Naive thymus-derived CD4-positive, alpha-beta T cell (primary cell): ENCODE measurements at regions of chr10 and their contacts with region 1.

Region 1: GRCh38 chr10:69506834-69507721 is 55.8 kb downstream of the TSPAN15 start:
- DNase-seq: peak in 2 of 9 donors; percentile 5
- ATAC-seq: peak; percentile 11
- H3K4me3 ChIP-seq: peak overlapping the region; percentile 43
- H3K4me3 Mint-ChIP-seq: peak overlapping the region; percentile 63 to 80 (median 74)
- H3K27ac ChIP-seq: no peak overlapping the region
- H3K27ac Mint-ChIP-seq: peak overlapping the region; percentile 58 to 93 (median 86)
- H3K4me1 ChIP-seq: peaks cover 7 to 8% of the 10 kb centered on the region in 2 donors
- H3K4me1 Mint-ChIP-seq: peaks cover 9 to 16% (median 10%) of the 10 kb centered on the region in 7 donors
- H3K27me3 ChIP-seq: no peaks in the 10 kb centered on the region
- H3K27me3 Mint-ChIP-seq: peaks cover 0 to 29% (median 0%) of the 10 kb centered on the region in 5 donors

Region 2: DNA sequence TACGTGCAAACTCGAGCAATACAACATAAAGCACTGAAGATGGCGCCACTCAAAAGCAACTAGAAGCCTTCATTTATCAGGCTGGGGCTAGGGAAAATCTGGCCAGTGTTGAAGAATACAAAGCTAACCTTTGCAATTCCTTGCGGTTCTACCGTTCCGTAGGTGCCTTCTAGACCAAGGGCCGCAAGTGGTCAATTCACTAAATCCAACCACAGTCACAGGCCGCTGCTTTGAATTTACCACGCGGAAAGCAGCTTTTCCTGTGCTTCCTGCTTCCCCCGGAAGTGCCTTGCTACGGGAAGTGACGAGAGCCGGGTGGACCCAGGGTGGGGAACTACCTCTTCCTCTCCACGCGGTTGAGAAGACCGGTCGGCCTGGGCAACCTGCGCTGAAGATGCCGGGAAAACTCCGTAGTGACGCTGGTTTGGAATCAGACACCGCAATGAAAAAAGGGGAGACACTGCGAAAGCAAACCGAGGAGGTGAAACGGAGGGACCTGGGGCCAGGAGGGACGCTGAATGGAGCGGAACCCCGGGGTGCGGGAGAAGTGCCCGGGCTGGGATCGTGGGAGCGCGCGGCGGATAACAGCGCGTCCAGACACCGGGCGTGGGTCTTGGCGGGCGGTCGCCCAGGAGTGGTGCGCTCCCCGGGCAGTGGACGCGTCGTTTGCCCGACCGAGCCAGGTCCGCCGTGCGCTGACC is 551.1 kb before region 1 on chr10 and contains the start of gene DDX21:
- CTCF ChIA-PET with region 1: no interaction called
- POLR2A ChIA-PET with region 1: no interaction called
- intact Hi-C with region 1: loop called in 1 of 2 experiments (anchors 5 kb)
- DNase-seq: peak; percentile 70 to 94 (median 89)
- ATAC-seq: peak; percentile 89
- H3K4me3 ChIP-seq: peak within 1 kb of the TSS; percentile 71
- H3K4me3 Mint-ChIP-seq: peak within 1 kb of the TSS; percentile 91 to 100 (median 98)
- H3K27ac ChIP-seq: peak within 1 kb of the TSS; percentile 97
- H3K27ac Mint-ChIP-seq: peak within 1 kb of the TSS; percentile 96 to 100 (median 99)
- H3K4me1 ChIP-seq: peaks cover 7 to 11% of the 10 kb centered on the region in 2 donors
- H3K4me1 Mint-ChIP-seq: peaks cover 15 to 53% (median 33%) of the 10 kb centered on the region in 7 donors
- H3K27me3 ChIP-seq: no peaks in the 10 kb centered on the region
- H3K27me3 Mint-ChIP-seq: no peaks in the 10 kb centered on the region
- total RNA-seq, gene DDX21: 43.5 to 101 (median 86.7) TPM

Region 3: DNA sequence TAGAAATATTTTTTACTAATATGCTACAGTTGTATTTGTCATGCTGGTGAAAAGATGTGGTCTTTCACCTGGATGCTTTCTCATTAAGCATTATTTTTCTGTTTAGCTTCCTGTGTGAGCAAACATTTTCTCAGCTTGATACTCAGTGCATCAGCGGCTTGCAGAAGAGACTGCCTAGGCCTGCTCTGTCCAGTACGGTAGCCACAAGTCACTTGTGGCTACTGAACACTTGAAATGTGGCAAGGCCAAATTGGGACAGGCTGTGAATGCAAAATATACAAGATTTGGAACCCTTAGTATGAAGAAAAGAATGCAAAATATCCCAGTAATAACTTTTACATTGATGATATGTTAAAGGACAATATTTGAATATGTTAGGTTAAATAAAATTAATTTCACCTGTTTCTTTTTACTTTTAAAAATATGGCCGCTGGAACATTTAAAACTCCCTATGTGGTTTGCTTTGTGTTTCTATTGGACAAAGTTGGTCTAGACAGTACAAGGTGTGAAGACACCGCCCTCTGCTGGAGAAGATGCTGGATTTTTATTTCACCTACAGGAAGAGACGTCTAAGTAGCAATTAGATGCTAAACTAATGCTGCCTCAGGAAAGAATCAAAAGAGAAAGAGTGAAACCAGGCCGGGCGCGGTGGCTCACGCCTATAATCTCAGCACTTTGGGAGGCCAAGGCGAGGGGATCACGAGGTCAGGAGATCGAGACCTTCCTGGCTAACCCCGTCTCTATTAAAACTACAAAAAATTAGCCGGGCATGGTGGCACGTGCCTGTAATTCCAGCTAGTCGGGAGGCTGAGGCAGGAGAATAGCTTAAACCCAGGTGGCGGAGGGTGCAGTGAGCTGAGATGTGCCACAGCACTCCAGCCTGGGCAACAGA is 413.9 kb before region 1 on chr10:
- CTCF ChIA-PET with region 1: no interaction called
- POLR2A ChIA-PET with region 1: no interaction called
- intact Hi-C with region 1: loop called in 1 of 2 experiments (anchors 5 kb)
- DNase-seq: peak; percentile 43 to 89 (median 85)
- ATAC-seq: peak; percentile 61
- H3K4me3 ChIP-seq: peak overlapping the region; percentile 19
- H3K4me3 Mint-ChIP-seq: peak overlapping the region in 7 of 10 donors; percentile 4 to 36 (median 15)
- H3K27ac ChIP-seq: peak overlapping the region; percentile 54
- H3K27ac Mint-ChIP-seq: peak overlapping the region; percentile 23 to 90 (median 63)
- H3K4me1 ChIP-seq: peaks cover 28 to 37% of the 10 kb centered on the region in 2 donors
- H3K4me1 Mint-ChIP-seq: peaks cover 23 to 64% (median 55%) of the 10 kb centered on the region in 7 donors
- H3K27me3 ChIP-seq: no peaks in the 10 kb centered on the region
- H3K27me3 Mint-ChIP-seq: no peaks in the 10 kb centered on the region

Region 4: DNA sequence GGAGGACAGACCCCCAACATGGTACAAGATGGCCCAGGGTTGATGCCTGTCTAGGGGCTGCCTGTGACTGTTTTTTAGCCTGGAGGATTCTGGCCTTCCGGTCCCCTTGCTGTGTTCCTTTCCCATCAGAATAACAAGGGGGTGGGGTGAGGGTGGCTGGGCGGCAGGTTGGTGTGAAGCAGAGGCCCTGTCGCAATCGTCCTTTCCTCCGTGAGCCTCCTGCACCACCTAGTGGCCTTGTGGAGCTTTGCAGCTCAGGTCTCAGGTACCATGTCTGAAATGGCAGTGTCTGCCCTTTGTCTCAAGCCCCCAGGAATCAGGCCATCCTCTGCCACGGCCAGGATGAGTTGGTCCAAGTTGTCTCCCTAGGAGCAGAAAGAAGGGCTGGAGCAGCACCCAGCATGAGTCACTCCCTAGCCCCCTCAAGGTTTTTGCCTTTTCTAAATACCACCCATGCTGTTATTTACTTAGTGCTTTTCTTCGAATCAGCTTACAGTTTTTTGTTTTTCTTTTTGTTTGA is 114.5 kb before region 1 on chr10:
- CTCF ChIA-PET with region 1: interaction called, 8 read pairs
- POLR2A ChIA-PET with region 1: no interaction called
- intact Hi-C with region 1: loop called in 1 of 2 experiments (anchors 1 kb)
- DNase-seq: peak; percentile 57 to 85 (median 81)
- ATAC-seq: peak; percentile 99
- H3K4me3 ChIP-seq: no peak overlapping the region
- H3K4me3 Mint-ChIP-seq: no peak overlapping the region
- H3K27ac ChIP-seq: peak overlapping the region; percentile 44
- H3K27ac Mint-ChIP-seq: peak overlapping the region; percentile 56 to 93 (median 84)
- H3K4me1 ChIP-seq: peaks cover 4 to 6% of the 10 kb centered on the region in 2 donors
- H3K4me1 Mint-ChIP-seq: peaks cover 8 to 35% (median 20%) of the 10 kb centered on the region in 7 donors
- H3K27me3 ChIP-seq: no peaks in the 10 kb centered on the region
- H3K27me3 Mint-ChIP-seq: no peaks in the 10 kb centered on the region

Region 5: GRCh38 chr10:69451209-69451783 is 55.8 kb before region 1 on chr10 and contains the start of gene TSPAN15:
- CTCF ChIA-PET with region 1: interaction called, 4 read pairs
- POLR2A ChIA-PET with region 1: no interaction called
- intact Hi-C with region 1: loop called (anchors 1 kb)
- DNase-seq: peak; percentile 61 to 81 (median 75)
- ATAC-seq: peak; percentile 94
- H3K4me3 ChIP-seq: peak within 1 kb of the TSS; percentile 67
- H3K4me3 Mint-ChIP-seq: peak within 1 kb of the TSS; percentile 80 to 92 (median 87)
- H3K27ac ChIP-seq: peak within 1 kb of the TSS; percentile 49
- H3K27ac Mint-ChIP-seq: peak within 1 kb of the TSS in 5 of 9 donors; percentile 5 to 82 (median 62)
- H3K4me1 ChIP-seq: peaks cover 0 to 6% of the 10 kb centered on the region in 2 donors
- H3K4me1 Mint-ChIP-seq: peaks cover 13 to 28% (median 22%) of the 10 kb centered on the region in 7 donors
- H3K27me3 ChIP-seq: no peaks in the 10 kb centered on the region
- H3K27me3 Mint-ChIP-seq: peaks cover 0 to 15% (median 5%) of the 10 kb centered on the region in 5 donors
- total RNA-seq, gene TSPAN15: 1.2 to 7.2 (median 1.9) TPM

Region 6: GRCh38 chr10:69577268-69578232 is 70.5 kb after region 1 on chr10:
- CTCF ChIA-PET with region 1: no interaction called
- POLR2A ChIA-PET with region 1: no interaction called
- intact Hi-C with region 1: no loop called
- DNase-seq: no peak
- ATAC-seq: no peak
- H3K4me3 ChIP-seq: no peak overlapping the region
- H3K4me3 Mint-ChIP-seq: no peak overlapping the region
- H3K27ac ChIP-seq: no peak overlapping the region
- H3K27ac Mint-ChIP-seq: no peak overlapping the region
- H3K4me1 ChIP-seq: peaks cover 9 to 13% of the 10 kb centered on the region in 2 donors
- H3K4me1 Mint-ChIP-seq: peaks cover 10 to 25% (median 19%) of the 10 kb centered on the region in 7 donors
- H3K27me3 ChIP-seq: peaks cover 0 to 12% of the 10 kb centered on the region in 2 donors
- H3K27me3 Mint-ChIP-seq: peaks cover 70 to 82% (median 74%) of the 10 kb centered on the region in 5 donors